Right lobe of liver (tissue), 6 donors: ENCODE measurements at regions of chr6 and their contacts with region 1.

Region 1: DNA sequence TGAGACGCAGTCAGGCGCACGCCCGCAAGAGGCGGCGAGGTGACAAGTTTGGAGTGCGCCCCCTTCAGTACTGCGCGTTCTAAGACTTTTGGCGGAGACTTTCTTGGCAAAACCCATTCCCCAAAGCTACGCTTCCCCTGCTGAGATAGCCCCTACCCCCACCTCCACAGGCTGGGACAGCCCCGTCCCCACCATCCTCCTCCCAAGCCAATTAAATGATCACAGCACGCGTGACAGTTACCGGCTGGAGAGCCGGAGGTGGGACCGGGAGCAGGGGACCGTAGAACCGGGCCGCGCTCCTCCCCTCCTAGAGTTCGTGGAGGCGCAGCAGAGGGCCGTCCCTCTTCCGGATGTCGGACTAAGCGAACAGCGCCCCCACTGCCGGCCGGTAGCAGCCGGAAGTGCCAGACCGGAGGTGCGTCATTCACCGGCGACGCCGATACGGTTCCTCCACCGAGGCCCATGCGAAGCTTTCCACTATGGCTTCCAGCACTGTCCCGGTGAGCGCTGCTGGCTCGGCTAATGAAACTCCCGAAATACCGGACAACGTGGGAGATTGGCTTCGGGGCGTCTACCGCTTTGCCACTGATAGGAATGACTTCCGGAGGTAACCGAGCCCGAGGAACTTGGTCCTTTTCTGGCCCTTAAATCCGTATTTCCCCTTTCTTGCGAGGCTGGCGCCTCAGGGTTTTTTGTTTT is at the start of gene TOMM6:
- DNase-seq: peak; percentile 97 to 98 (median 97)
- ATAC-seq: peak; percentile 88 to 92 (median 89)
- H3K4me3 ChIP-seq: peak within 1 kb of the TSS; percentile 80 to 83 (median 81)
- H3K27ac ChIP-seq: peak within 1 kb of the TSS; percentile 70 to 88 (median 88)
- H3K4me1 ChIP-seq: peaks cover 0 to 18% (median 10%) of the 10 kb centered on the region in 4 donors
- H3K27me3 ChIP-seq: no peaks in the 10 kb centered on the region
- CTCF ChIP-seq: peak; percentile 92 to 98 (median 94)
- POLR2A ChIP-seq: peak; percentile 84
- total RNA-seq, gene TOMM6: 61.8 to 104 (median 75.6) TPM

Region 2: DNA sequence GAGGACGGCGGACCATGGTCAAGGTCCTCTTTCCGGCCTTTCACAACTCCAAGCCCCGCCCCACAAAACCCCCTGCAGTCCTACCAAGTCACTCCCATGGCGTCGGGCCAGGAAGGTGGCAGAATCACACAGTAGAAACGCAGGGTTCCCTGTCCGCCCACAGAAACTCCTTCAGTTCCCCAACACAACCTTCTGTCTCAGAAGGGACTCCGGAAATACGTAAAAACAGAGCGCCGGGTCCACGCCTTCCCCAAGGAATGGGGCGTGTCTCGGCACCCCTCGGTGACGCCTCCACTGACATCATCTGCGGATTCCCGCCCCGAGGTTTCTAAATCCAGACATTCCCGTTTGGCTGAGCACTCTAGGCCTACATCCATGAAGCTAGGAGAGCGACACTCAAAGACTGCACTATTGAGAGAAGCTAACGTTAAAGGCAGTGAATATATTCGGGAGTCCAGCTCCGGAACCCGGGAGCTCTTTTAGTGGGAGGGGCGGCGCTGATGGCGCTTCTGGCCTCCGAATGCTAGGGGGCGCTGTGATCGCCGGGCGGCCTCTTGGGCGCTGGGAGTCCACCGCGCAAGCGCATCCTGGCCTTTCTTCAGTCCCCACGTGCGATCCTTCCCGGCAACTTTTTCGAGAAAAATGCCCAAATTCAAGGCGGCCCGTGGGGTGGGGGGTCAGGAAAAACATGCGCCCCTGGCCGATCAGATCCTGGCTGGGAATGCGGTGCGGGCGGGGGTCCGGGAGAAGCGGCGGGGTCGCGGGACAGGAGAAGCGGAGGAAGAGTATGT is 133.7 kb after region 1 on chr6 and contains the starts of genes BYSL and MED20:
- intact Hi-C with region 1: loop called (anchors 10 kb)
- DNase-seq: peak; percentile 92 to 96 (median 94)
- ATAC-seq: peak; percentile 97 to 98 (median 97)
- H3K4me3 ChIP-seq: peak within 1 kb of the TSS; percentile 73 to 93 (median 85)
- H3K27ac ChIP-seq: peak within 1 kb of the TSS; percentile 87 to 98 (median 95)
- H3K4me1 ChIP-seq: peaks cover 0 to 29% (median 6%) of the 10 kb centered on the region in 4 donors
- H3K27me3 ChIP-seq: no peaks in the 10 kb centered on the region
- CTCF ChIP-seq: peak; percentile 97 to 99 (median 98)
- POLR2A ChIP-seq: peak; percentile 40
- total RNA-seq, gene BYSL: 3.7 to 10.8 (median 8.4) TPM
- total RNA-seq, gene MED20: 7.2 to 10.8 (median 7.7) TPM

Region 3: DNA sequence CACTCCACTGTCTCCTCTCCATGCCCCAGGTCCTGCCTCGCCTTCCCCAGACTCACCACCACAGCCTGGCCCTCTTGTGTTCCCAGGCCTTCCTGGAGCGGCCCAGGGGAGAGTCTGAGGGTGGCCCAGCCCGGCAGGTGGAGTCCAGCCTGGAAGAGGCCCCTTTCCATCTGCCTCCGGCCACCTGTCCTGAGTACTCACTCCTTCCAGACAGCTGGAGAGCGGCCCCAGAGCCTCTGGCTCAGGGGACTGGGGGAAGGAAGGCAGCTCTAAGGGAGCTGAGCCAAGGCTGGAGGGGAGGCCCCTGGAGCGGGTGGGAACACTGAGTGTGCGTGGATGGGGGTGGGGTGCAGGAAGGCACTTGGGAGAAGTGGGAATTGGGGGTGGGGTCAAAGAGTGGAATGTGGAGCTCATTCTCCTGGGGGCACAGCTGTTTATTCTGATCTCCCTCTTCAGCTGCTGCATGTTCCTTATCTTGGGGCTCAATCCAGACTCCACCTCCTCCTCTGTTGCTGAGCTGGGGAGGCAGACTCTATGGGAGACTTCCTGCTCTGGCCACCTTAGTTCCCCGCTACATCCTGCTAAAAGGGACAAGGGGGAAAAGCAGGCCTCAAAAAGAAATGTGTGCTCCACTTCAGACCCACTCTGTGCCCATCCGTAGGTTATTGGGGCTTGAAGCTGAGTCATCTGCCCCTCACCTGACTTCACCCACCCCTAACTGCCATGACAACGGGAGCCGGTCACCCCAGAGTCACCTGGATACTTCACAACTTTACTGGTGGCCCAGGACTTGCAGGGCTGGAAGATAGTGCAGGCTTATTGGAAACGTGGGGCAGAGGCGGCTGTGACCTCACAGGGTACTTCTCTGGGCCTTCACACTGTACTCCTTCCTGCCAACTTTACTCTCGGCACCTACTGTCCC is 243.5 kb after region 1 on chr6:
- intact Hi-C with region 1: loop called in 1 of 2 experiments (anchors 10 kb)
- DNase-seq: no peak
- ATAC-seq: peak; percentile 18 to 33 (median 22)
- H3K4me3 ChIP-seq: no peak overlapping the region
- H3K27ac ChIP-seq: no peak overlapping the region
- H3K4me1 ChIP-seq: no peaks in the 10 kb centered on the region
- H3K27me3 ChIP-seq: no peaks in the 10 kb centered on the region
- CTCF ChIP-seq: no peak
- POLR2A ChIP-seq: no peak

Region 4: GRCh38 chr6:42043787-42044475 is 256.6 kb after region 1 on chr6:
- intact Hi-C with region 1: loop called (anchors 10 kb)
- DNase-seq: peak; percentile 85 to 86 (median 86)
- ATAC-seq: peak; percentile 75 to 84 (median 77)
- H3K4me3 ChIP-seq: peak overlapping the region in 1 of 3 donors; percentile 11
- H3K27ac ChIP-seq: no peak overlapping the region
- H3K4me1 ChIP-seq: peaks cover 0 to 24% (median 8%) of the 10 kb centered on the region in 4 donors
- H3K27me3 ChIP-seq: no peaks in the 10 kb centered on the region
- CTCF ChIP-seq: peak; percentile 95 to 98 (median 97)
- POLR2A ChIP-seq: no peak